H1 (cell line): ENCODE measurements at regions of chr11 and their contacts with region 1.

Region 1: DNA sequence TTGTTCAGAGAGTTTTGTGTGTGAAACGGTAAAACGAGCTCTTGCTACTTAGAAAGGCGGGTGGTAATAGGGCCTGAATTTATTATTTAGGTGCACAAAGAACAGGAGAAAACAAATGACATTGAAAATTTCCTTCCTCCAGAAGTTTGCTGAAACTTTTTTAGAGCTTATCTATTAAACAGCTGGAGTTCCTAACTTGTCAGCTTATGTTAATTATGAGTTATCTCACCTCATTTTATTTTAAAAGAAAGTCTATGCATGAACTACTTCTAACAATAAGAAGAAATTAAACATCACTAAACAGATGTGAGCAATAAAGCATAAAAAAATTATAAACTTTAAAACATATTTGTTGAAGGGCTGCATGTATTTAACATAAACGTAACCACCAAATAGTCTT is 373.9 kb upstream of the ANO3 start:
- DNase-seq: no peak
- H3K4me3 ChIP-seq: no peak overlapping the region
- H3K27ac ChIP-seq: no peak overlapping the region
- H3K4me1 ChIP-seq: no peaks in the 10 kb centered on the region
- H3K27me3 ChIP-seq: no peaks in the 10 kb centered on the region
- CTCF ChIP-seq: no peak
- EP300 ChIP-seq: no peak
- POLR2A ChIP-seq: no peak
- RAD21 ChIP-seq: no peak

Region 2: GRCh38 chr11:25899761-25900160 is 58.3 kb before region 1 on chr11:
- CTCF ChIA-PET with region 1: no interaction called
- POLR2A ChIA-PET with region 1: no interaction called
- DNase-seq: no peak
- H3K4me3 ChIP-seq: no peak overlapping the region
- H3K27ac ChIP-seq: no peak overlapping the region
- H3K4me1 ChIP-seq: no peaks in the 10 kb centered on the region
- H3K27me3 ChIP-seq: no peaks in the 10 kb centered on the region; a peak in 1 of 7 replicates
- CTCF ChIP-seq: no peak
- EP300 ChIP-seq: no peak
- POLR2A ChIP-seq: no peak
- RAD21 ChIP-seq: no peak

Region 3: GRCh38 chr11:25910086-25910485 is 48.0 kb before region 1 on chr11:
- CTCF ChIA-PET with region 1: no interaction called
- POLR2A ChIA-PET with region 1: no interaction called
- DNase-seq: no peak
- H3K4me3 ChIP-seq: no peak overlapping the region
- H3K27ac ChIP-seq: no peak overlapping the region
- H3K4me1 ChIP-seq: no peaks in the 10 kb centered on the region
- H3K27me3 ChIP-seq: no peaks in the 10 kb centered on the region
- CTCF ChIP-seq: no peak
- EP300 ChIP-seq: no peak
- POLR2A ChIP-seq: no peak
- RAD21 ChIP-seq: no peak

Region 4: DNA sequence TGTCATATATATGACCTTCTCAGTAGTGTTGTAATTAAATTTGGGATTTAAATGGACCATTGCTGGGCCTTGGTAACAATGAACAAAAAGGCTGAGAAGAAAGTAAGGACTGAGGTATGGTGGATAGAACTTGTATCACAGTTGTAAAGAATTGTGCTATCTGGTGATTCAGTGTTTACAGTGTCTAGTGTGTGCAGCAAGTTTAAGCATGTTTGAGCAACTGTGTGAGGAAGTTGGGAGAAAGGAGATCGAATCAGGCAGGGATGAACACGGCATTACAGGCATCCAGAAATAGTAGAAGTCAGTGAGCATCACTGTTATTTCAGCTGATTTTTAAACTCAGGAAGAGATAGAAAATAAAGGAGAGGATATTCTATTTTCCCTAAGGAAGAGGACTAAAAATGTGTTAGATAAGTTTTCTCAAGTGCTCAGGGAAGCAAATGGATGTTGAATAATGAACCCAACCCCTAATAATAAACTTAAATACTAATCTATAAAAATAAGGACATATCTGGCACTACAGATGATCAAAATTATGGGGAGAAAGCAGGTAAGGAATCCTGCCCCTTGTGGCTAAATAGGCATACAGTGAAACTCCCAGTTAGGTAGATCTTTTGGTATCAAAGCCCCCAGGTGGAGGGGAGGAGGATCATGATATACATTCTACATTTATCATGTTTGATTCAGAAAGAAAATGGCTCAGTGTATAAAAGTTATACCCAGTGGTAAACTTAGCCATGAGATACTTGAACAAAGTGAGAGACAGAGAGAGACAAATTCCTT is 12.9 kb after region 1 on chr11:
- CTCF ChIA-PET with region 1: interaction called, 16 read pairs
- POLR2A ChIA-PET with region 1: no interaction called
- DNase-seq: no peak
- H3K4me3 ChIP-seq: no peak overlapping the region
- H3K27ac ChIP-seq: no peak overlapping the region
- H3K4me1 ChIP-seq: no peaks in the 10 kb centered on the region
- H3K27me3 ChIP-seq: no peaks in the 10 kb centered on the region
- CTCF ChIP-seq: peak in 2 of 3 experiments; percentile 56 to 74; a peak in 3 of 4 replicates
- EP300 ChIP-seq: no peak
- POLR2A ChIP-seq: no peak
- RAD21 ChIP-seq: peak; percentile 30 to 42; a peak in 2 of 4 replicates